ENCODE measurements at regions of chr18 and their contacts with region 1.

Region 1: DNA sequence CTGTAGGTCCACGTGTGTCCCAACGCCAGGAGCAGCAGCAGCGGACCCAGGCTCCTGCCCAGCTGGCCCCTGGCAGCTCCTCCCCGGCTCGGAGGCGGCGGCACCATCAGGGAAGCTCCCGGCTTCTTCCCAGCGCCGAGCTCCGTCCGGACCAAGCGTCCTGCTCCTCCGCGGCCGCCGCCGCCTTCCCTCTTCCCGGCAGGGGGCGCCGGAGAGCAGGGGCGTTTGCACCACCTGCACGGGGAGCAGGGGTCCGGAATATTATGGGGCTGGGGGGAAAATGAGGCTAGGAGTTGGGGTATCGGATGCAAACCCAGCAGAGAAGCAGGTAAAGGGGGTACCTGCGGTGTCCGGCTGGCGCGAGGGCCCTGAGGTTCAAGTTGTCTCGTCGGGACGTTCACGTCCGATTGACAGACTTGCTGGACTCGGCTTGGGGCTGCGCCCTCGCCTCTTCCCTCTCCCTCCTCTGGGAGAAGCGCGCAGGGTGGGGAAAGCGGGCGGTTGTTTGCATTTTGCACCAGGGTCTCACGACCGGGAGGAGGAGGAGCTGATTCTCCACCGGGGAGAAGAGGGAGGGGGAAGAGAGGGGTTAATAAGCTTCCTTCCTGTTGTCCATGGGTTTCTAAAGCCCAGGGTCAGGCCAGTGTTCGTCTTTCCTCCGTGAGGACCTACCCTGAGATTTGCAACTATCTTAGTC is at the start of gene CCBE1:
- DNase-seq: peak; percentile 79 to 92 (median 89)
- H3K4me3 ChIP-seq: peak within 1 kb of the TSS; percentile 51
- H3K27ac ChIP-seq: peak within 1 kb of the TSS; percentile 40 to 82
- H3K4me1 ChIP-seq: peaks cover 8% of the 10 kb centered on the region
- H3K27me3 ChIP-seq: no peaks in the 10 kb centered on the region
- CTCF ChIP-seq: peak; percentile 86 to 97 (median 87)
- EP300 ChIP-seq: no peak
- POLR2A ChIP-seq: peak; percentile 25
- total RNA-seq, gene CCBE1: 15.9 to 109 (median 43.9) TPM

Region 2: DNA sequence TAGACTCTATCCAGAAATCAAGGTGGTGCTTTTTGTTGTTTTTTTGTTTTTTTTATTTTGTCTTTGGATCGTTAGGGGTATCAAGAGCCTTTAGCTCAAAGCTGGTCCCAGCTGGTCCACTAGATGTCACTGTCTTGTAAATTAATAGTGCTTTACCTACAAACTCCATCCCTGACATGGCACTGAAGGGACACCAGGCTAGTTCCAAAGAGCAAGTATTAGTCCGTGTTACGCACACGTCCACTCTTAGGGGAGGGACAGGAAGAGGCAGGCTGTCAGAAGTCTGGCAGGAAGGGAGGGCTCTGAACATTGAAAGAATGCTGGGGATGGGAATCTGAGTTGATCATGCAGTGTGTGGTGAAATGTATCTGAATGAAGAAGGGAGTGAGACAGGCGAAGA is 85.8 kb after region 1 on chr18:
- intact Hi-C with region 1: no loop called
- DNase-seq: peak in 1 of 5 donors; percentile 20
- H3K4me3 ChIP-seq: no peak overlapping the region
- H3K27ac ChIP-seq: no peak overlapping the region
- H3K4me1 ChIP-seq: no peaks in the 10 kb centered on the region
- H3K27me3 ChIP-seq: no peaks in the 10 kb centered on the region
- CTCF ChIP-seq: peak in 1 of 3 donors; percentile 10
- EP300 ChIP-seq: no peak
- POLR2A ChIP-seq: no peak

Region 3: GRCh38 chr18:59814891-59815290 is 117.5 kb after region 1 on chr18:
- intact Hi-C with region 1: loop called in 1 of 4 experiments (anchors 10 kb)
- DNase-seq: no peak
- H3K4me3 ChIP-seq: no peak overlapping the region
- H3K27ac ChIP-seq: no peak overlapping the region
- H3K4me1 ChIP-seq: no peaks in the 10 kb centered on the region
- H3K27me3 ChIP-seq: no peaks in the 10 kb centered on the region
- CTCF ChIP-seq: no peak
- EP300 ChIP-seq: no peak
- POLR2A ChIP-seq: no peak

Measured in ovary (tissue), 10 donors.